ENCODE measurements at regions of chrX and their contacts with region 1.

Region 1: GRCh38 chrX:43557792-43558191 is 98.3 kb upstream of the MAOA start:
- DNase-seq: peak; percentile 20
- H3K4me3 Mint-ChIP-seq: no peak overlapping the region
- H3K27ac Mint-ChIP-seq: no peak overlapping the region
- H3K4me1 Mint-ChIP-seq: peaks cover 17% of the 10 kb centered on the region
- H3K27me3 Mint-ChIP-seq: no peaks in the 10 kb centered on the region

Region 2: GRCh38 chrX:41781502-41781901 is 1776.3 kb before region 1 on chrX:
- intact Hi-C with region 1: loop called (anchors 5 kb)
- DNase-seq: no peak
- H3K4me3 Mint-ChIP-seq: no peak overlapping the region
- H3K27ac Mint-ChIP-seq: no peak overlapping the region
- H3K4me1 Mint-ChIP-seq: no peaks in the 10 kb centered on the region
- H3K27me3 Mint-ChIP-seq: no peaks in the 10 kb centered on the region

Region 3: GRCh38 chrX:41796577-41796976 is 1761.2 kb before region 1 on chrX:
- intact Hi-C with region 1: loop called (anchors 5 kb)
- DNase-seq: no peak
- H3K4me3 Mint-ChIP-seq: no peak overlapping the region
- H3K27ac Mint-ChIP-seq: no peak overlapping the region
- H3K4me1 Mint-ChIP-seq: peaks cover 17% of the 10 kb centered on the region
- H3K27me3 Mint-ChIP-seq: no peaks in the 10 kb centered on the region

Region 4: GRCh38 chrX:43349363-43349762 is 208.4 kb before region 1 on chrX:
- intact Hi-C with region 1: loop called (anchors 1 kb)
- DNase-seq: peak; percentile 8
- H3K4me3 Mint-ChIP-seq: no peak overlapping the region
- H3K27ac Mint-ChIP-seq: no peak overlapping the region
- H3K4me1 Mint-ChIP-seq: peaks cover 7% of the 10 kb centered on the region
- H3K27me3 Mint-ChIP-seq: peaks cover 3% of the 10 kb centered on the region

Region 5: DNA sequence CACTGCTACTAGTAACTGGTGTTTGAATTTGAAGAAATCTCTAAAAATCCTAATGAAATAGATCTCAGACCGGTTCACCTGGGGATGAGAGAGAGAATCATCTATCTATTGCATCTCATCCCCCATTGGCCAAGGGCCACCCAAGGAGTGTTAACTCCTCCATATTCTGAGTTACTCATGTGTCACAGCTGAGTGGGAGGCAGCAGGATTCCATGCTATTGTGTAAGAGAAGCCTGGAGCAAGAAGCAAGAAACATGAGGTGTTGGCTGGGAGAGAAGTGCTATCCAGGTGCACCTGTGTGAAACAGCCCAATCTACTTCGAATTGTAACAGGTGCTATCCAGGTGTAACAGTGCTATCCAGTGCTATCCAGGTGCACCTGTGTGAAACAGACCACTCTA is 52.0 kb before region 1 on chrX:
- intact Hi-C with region 1: no loop called
- DNase-seq: no peak
- H3K4me3 Mint-ChIP-seq: no peak overlapping the region
- H3K27ac Mint-ChIP-seq: no peak overlapping the region
- H3K4me1 Mint-ChIP-seq: peaks cover 5% of the 10 kb centered on the region
- H3K27me3 Mint-ChIP-seq: no peaks in the 10 kb centered on the region

Region 6: DNA sequence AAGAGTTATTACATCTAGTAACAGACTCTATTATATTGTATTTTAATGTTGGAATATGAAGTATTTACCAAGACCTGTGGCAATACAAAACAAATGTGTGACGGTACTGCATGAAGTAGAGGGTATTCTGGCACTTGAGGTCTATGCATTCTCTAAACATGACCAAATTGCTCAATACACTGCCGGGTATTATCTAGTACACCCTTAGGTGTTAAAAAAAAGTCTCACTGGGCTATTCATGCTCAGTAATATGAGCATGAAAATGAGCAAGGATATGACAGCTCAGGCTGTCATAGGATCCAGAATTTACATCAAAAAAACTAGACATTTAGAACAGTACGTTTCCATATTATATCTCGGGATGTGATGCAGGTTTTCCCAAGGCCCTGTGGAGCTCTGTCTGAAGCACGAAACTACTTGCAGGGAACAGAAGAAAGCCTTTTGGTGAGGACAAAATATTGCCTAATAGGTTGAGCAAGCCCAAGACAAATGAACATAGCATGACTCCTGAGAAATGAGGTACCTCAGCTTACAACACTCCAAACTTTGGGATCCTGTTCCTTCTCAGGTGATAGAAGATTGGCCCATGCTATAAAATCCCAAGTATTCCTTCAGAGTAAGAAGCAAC is 24.2 kb after region 1 on chrX:
- intact Hi-C with region 1: no loop called
- DNase-seq: no peak
- H3K4me3 Mint-ChIP-seq: no peak overlapping the region
- H3K27ac Mint-ChIP-seq: no peak overlapping the region
- H3K4me1 Mint-ChIP-seq: peaks cover 14% of the 10 kb centered on the region
- H3K27me3 Mint-ChIP-seq: no peaks in the 10 kb centered on the region

Region 7: DNA sequence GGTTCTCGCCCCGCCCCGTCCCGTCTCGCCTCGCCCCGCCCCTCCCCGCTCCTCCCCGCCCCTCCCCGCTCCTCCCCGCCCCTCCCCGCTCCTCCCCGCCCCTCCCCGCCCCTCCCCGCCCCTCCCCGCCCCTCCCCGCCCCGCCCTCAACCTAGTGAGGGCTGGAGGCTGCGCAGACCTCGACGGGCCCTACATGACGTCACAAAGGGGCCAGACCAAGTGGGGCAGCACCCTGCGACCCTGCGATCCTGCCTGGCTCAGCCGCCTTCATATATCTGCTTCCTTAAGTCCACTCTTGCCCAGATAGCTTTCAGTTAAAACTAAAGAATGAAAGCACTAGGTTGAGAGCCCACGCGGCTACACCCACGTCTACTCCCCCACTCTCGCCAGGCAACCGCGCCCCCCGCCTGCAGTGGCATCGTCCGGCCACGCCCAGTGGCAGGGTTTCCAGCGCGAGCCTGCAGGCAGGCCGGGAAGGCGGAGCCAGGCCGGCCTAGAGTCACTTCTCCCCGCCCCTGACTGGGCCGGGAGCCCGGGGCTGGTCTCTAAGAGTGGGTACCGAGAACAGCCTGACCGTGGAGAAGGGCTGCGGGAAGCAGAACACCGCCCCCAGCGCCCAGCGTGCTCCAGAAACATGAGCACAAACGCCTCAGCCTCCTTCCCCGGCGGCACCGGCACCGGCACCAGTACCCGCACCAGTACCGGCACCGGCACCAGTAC is 96.8 kb after region 1 on chrX:
- intact Hi-C with region 1: loop called (anchors 5 kb)
- DNase-seq: peak; percentile 86
- H3K4me3 Mint-ChIP-seq: peak overlapping the region; percentile 97
- H3K27ac Mint-ChIP-seq: peak overlapping the region; percentile 100
- H3K4me1 Mint-ChIP-seq: peaks cover 17% of the 10 kb centered on the region
- H3K27me3 Mint-ChIP-seq: no peaks in the 10 kb centered on the region

Region 8: DNA sequence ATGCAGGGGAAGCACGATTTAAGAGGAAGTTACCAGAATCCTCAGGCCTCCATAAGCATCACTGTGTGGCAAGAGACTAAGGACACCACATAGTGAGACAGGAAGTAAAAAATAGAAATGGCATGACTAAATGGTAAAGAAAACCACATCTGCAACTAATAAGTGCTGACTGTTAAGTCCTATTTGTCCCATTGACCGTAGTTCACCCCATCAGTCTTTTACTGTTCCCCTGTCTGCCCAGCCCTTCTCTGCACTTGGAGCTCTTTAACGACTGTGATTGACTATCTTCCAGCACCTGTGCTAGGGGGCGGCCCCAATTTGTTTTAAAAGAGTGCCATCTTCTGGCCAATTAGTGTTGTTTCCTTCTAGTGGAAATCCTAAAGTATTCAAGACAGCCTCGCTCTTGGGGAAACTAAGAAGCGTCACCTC is 192.5 kb after region 1 on chrX:
- intact Hi-C with region 1: loop called (anchors 1 kb)
- DNase-seq: peak; percentile 26
- H3K4me3 Mint-ChIP-seq: no peak overlapping the region
- H3K27ac Mint-ChIP-seq: peak overlapping the region; percentile 42
- H3K4me1 Mint-ChIP-seq: peaks cover 40% of the 10 kb centered on the region
- H3K27me3 Mint-ChIP-seq: no peaks in the 10 kb centered on the region

Region 9: DNA sequence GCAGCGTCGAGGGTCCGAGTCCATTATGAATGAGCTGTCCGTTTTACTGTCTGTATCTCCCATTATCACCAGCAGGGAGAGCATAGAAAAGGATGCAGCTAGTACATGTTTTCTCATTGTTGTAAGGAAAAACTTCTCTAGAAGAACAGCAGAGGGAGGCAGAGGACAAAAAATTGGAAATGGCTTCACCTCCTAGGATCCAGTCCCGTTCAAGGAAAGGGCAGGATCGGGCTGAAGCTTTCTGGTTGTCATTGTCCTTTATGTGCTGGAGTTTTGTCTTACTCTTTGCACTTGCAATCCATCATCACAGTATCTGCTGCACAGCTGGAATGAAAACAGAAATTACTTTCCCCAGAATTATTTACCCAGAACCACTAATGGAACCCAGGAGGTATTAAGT is 400.7 kb after region 1 on chrX:
- intact Hi-C with region 1: loop called (anchors 10 kb)
- DNase-seq: no peak
- H3K4me3 Mint-ChIP-seq: no peak overlapping the region
- H3K27ac Mint-ChIP-seq: no peak overlapping the region
- H3K4me1 Mint-ChIP-seq: peaks cover 9% of the 10 kb centered on the region
- H3K27me3 Mint-ChIP-seq: peaks cover 2% of the 10 kb centered on the region

Measured in activated T-helper 2 cell treated with anti-CD3 and anti-CD28 coated beads, Interferon-gamma antibody, Interleukin-2, Interleukin-4, amounts not matched to agents 10 μg/mL and 5 μg/mL and 100 μg/mL, durations not matched to agents 14 hours and 24 hours and 36 hours (primary cell).